Sciatic nerve (tissue), 2 donors: ENCODE measurements at regions of chr2 and their contacts with region 1.

Region 1: GRCh38 chr2:152729844-152730243 is 11.4 kb downstream of the ARL6IP6 start:
- DNase-seq: no peak
- ATAC-seq: no peak

Region 2: GRCh38 chr2:152175458-152176325 is 554.2 kb before region 1 on chr2 and contains the start of gene STAM2:
- intact Hi-C with region 1: loop called (anchors 10 kb)
- DNase-seq: peak; percentile 96
- ATAC-seq: peak; percentile 96
- total RNA-seq, gene STAM2: 42.1 TPM